ENCODE measurements at regions of chr10 and their contacts with region 1.

Region 1: GRCh38 chr10:114703377-114704107 is 45.5 kb upstream of the ABLIM1 start:
- H3K4me3 ChIP-seq: no peak overlapping the region
- H3K27ac ChIP-seq: no peak overlapping the region
- H3K4me1 ChIP-seq: peaks cover 10% of the 10 kb centered on the region; the same call in 1 of the 2 replicates
- CTCF ChIP-seq: peak; percentile 52

Region 2: GRCh38 chr10:114550756-114551635 is 152.5 kb before region 1 on chr10:
- CTCF ChIA-PET with region 1: interaction called, 52 read pairs
- POLR2A ChIA-PET with region 1: interaction called, 3 read pairs
- H3K4me3 ChIP-seq: no peak overlapping the region
- H3K27ac ChIP-seq: peak overlapping the region; percentile 38
- H3K4me1 ChIP-seq: peaks cover 10% of the 10 kb centered on the region
- CTCF ChIP-seq: no peak

Region 3: GRCh38 chr10:114714281-114714741 is 10.8 kb after region 1 on chr10:
- CTCF ChIA-PET with region 1: interaction called, 16 read pairs
- POLR2A ChIA-PET with region 1: interaction called, 4 read pairs
- H3K4me3 ChIP-seq: no peak overlapping the region
- H3K27ac ChIP-seq: peak overlapping the region; percentile 71
- H3K4me1 ChIP-seq: peaks cover 53% of the 10 kb centered on the region
- CTCF ChIP-seq: no peak

Region 4: GRCh38 chr10:114779803-114780609 is 76.5 kb after region 1 on chr10:
- CTCF ChIA-PET with region 1: interaction called, 13 read pairs
- POLR2A ChIA-PET with region 1: no interaction called
- H3K4me3 ChIP-seq: no peak overlapping the region
- H3K27ac ChIP-seq: peak overlapping the region; percentile 89
- H3K4me1 ChIP-seq: peaks cover 19% of the 10 kb centered on the region
- CTCF ChIP-seq: no peak